A673 (cell line): ENCODE measurements at regions of chr10 and their contacts with region 1.

Region 1: GRCh38 chr10:70146489-70147258 is at the start of gene TYSND1:
- DNase-seq: peak; percentile 100
- H3K4me3 ChIP-seq: peak within 1 kb of the TSS; percentile 75
- H3K27ac ChIP-seq: peak within 1 kb of the TSS; percentile 97
- H3K4me1 ChIP-seq: peaks cover 24% of the 10 kb centered on the region
- H3K27me3 ChIP-seq: no peaks in the 10 kb centered on the region
- CTCF ChIP-seq: peak; percentile 83
- total RNA-seq, gene TYSND1: 36.5 and 46.3 TPM in 2 replicates

Region 2: DNA sequence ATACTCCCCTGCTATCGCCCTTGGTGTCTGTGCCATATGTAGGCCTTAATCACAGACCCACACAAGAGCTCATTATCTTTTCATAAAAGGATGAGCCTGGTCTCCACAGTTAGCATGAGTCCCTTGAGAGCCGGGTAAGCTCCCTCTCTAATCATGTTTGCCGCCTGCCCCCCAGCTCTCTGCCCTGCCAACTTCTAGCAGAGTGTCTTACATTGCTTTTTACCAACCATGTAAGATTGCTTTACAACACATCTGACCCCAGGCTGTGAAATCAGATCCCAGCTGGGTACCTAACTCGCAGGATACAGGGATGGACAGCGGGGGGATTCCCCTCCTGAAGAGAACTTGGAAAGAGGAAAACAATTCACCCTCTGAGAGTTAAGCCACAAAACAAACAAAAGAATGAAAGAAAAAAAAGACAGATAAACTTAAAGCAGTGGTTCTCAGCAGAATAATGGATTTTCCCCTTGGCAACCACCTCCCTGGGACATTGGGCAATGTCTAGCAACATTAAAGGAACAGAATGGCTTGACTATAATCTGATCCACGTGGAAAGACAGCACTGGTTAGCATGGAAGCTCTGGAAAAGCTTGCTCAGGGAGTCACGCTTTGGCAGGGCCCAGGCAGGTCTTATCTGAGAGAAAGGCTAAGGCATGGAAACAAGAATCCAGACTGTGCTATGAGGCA is 1875.3 kb before region 1 on chr10:
- CTCF ChIA-PET with region 1: no interaction called
- POLR2A ChIA-PET with region 1: no interaction called
- intact Hi-C with region 1: no loop called
- DNase-seq: peak; percentile 89
- H3K4me3 ChIP-seq: no peak overlapping the region
- H3K27ac ChIP-seq: peak overlapping the region; percentile 8
- H3K4me1 ChIP-seq: peaks cover 12% of the 10 kb centered on the region
- H3K27me3 ChIP-seq: no peaks in the 10 kb centered on the region
- CTCF ChIP-seq: no peak

Region 3: GRCh38 chr10:69936091-69936490 is 210.6 kb before region 1 on chr10:
- CTCF ChIA-PET with region 1: no interaction called
- POLR2A ChIA-PET with region 1: no interaction called
- intact Hi-C with region 1: loop called (anchors 2 kb)
- DNase-seq: peak; percentile 93
- H3K4me3 ChIP-seq: no peak overlapping the region
- H3K27ac ChIP-seq: peak overlapping the region; percentile 87
- H3K4me1 ChIP-seq: peaks cover 67% of the 10 kb centered on the region
- H3K27me3 ChIP-seq: no peaks in the 10 kb centered on the region
- CTCF ChIP-seq: peak; percentile 57

Region 4: DNA sequence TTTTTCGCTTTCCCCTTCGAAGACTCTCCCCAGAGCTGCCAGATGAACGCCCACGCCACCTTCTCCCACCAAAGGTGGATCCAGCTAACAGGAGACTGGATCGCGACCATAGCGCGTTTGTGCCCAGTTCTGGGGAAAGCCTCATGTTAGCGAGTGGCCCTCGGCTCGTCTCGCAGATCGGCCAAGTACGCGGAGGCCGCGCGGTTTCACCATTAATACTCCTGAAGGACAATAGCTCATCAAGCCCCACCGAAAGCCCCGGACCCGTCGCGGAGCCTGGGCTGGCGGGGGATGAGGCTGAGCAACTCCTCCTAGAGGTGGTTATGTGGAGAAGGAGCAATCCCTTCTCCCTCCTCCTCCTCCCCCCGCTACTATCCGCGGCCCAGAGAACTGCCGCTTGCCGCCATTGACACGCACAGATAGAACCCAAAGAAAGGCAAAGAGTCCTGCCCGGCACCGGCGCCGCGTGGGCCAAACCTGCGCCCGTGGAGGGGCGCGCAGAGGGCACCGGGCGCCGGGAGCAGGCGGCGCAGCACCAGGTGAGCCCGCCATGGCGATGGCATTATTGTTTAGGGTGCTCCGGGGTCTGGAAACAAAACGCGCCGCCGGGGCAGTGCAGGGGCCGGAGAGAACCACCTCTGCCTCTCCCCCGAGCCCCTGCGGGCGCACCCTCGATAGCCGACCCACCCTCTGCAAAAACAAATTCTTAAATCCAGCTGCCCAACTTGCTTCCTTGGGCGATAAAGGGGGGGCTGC is 94.0 kb before region 1 on chr10 and contains the start of gene MACROH2A2:
- CTCF ChIA-PET with region 1: no interaction called
- POLR2A ChIA-PET with region 1: no interaction called
- intact Hi-C with region 1: loop called (anchors 5 kb)
- DNase-seq: peak; percentile 93
- H3K4me3 ChIP-seq: peak within 1 kb of the TSS; percentile 87
- H3K27ac ChIP-seq: peak within 1 kb of the TSS; percentile 100
- H3K4me1 ChIP-seq: peaks cover 78% of the 10 kb centered on the region
- H3K27me3 ChIP-seq: no peaks in the 10 kb centered on the region
- CTCF ChIP-seq: peak; percentile 56
- total RNA-seq, gene MACROH2A2: 301 and 326 TPM in 2 replicates

Region 5: GRCh38 chr10:70169649-70170364 is 23.1 kb after region 1 on chr10:
- CTCF ChIA-PET with region 1: interaction called, 14 read pairs
- POLR2A ChIA-PET with region 1: interaction called, 3 read pairs
- intact Hi-C with region 1: no loop called
- DNase-seq: peak; percentile 20
- H3K4me3 ChIP-seq: peak overlapping the region; percentile 94
- H3K27ac ChIP-seq: peak overlapping the region; percentile 93
- H3K4me1 ChIP-seq: peaks cover 13% of the 10 kb centered on the region
- H3K27me3 ChIP-seq: no peaks in the 10 kb centered on the region
- CTCF ChIP-seq: no peak

Region 6: DNA sequence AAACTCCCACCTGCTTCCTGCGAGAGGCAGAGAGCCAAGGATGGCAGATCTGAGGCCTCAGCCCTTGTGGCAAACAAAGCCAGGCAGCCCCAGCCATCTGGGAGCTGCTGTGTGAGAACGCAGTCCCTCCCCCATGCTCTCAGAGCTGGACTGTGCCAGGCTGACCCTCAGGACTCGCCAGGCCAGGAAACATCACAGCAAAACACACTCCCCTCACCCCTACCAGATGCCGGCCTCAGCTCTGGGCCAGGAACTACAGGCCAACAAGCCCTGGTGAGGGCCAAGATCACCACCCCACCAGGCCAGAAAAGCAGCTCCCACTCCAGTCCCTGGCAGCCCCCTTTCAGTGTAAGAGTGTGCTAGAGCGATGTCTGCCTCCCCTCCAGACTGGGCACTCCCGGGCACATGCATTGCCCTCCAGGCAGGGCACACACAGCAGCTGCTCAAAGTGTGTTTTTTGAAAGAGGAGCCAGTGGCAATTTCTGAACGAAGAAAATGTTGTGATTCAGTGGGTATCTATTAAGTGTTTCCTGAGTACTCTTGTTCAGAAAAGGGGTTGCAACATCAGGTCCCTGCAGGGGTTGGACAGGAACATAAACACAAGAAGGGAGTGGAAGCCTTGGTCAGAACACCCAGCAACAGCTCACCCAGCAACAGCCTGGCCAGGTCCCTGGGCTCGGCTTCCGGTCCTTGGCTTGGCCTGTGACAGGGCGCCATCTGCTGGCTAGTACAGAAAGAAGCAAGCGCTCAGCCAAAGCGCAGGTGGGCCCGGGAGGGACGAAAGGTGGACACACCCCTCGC is 217.5 kb after region 1 on chr10:
- CTCF ChIA-PET with region 1: interaction called, 13 read pairs
- POLR2A ChIA-PET with region 1: no interaction called
- intact Hi-C with region 1: loop called (anchors 2 kb)
- DNase-seq: peak; percentile 95
- H3K4me3 ChIP-seq: no peak overlapping the region
- H3K27ac ChIP-seq: peak overlapping the region; percentile 78
- H3K4me1 ChIP-seq: peaks cover 16% of the 10 kb centered on the region
- H3K27me3 ChIP-seq: no peaks in the 10 kb centered on the region
- CTCF ChIP-seq: peak; percentile 97